Left ventricle myocardium superior (tissue), 1 donor: ENCODE measurements at regions of chr3 and their contacts with region 1.

Region 1: GRCh38 chr3:156554842-156555687 is at the start of gene SSR3:
- DNase-seq: peak; percentile 100
- ATAC-seq: peak; percentile 99
- total RNA-seq, gene SSR3: 223 TPM

Region 2: GRCh38 chr3:156826144-156826895 is 271.3 kb after region 1 on chr3 and contains the start of gene LEKR1:
- intact Hi-C with region 1: loop called (anchors 10 kb)
- DNase-seq: peak; percentile 94
- ATAC-seq: peak; percentile 99
- total RNA-seq, gene LEKR1: 0.62 TPM